Activated CD4-positive, alpha-beta T cell treated with anti-CD3 and anti-CD28 coated beads for 36 hours (primary cell): ENCODE measurements at regions of chr2 and their contacts with region 1.

Region 1: DNA sequence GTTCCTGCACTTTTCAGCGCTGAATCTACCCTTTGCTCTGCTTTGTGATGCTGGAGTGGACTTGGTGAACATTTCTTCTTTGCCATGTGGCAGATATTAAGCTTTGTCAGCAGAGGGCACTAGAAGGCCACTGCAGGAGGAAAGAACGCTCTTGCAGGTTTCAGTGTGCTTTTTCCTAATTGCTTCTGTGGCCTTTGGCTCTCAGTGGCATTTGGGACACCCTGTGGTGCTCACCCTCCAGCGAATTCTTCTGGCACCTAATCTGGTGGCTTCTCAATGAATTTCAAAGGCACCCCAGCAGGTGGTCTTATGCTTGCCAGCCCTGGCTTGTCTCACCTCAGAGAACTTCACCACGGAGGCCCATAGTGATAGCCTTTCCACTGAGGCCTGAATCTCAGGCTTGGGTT is 146.7 kb downstream of the MYO3B start:
- DNase-seq: peak; percentile 63
- ATAC-seq: peak; percentile 36
- H3K4me3 Mint-ChIP-seq: no peak overlapping the region
- H3K27ac Mint-ChIP-seq: no peak overlapping the region
- H3K4me1 Mint-ChIP-seq: no peaks in the 10 kb centered on the region
- H3K27me3 Mint-ChIP-seq: peaks cover 4% of the 10 kb centered on the region

Region 2: GRCh38 chr2:170341684-170342623 is 17.3 kb after region 1 on chr2:
- CTCF ChIA-PET with region 1: interaction called, 12 read pairs
- POLR2A ChIA-PET with region 1: no interaction called
- intact Hi-C with region 1: no loop called
- DNase-seq: no peak
- ATAC-seq: no peak
- H3K4me3 Mint-ChIP-seq: no peak overlapping the region
- H3K27ac Mint-ChIP-seq: peak overlapping the region; percentile 13
- H3K4me1 Mint-ChIP-seq: peaks cover 22% of the 10 kb centered on the region
- H3K27me3 Mint-ChIP-seq: peaks cover 5% of the 10 kb centered on the region